ENCODE measurements at regions of chr17 and their contacts with region 1.

Region 1: GRCh38 chr17:18183334-18184142 is at the start of gene ALKBH5:
- DNase-seq: peak; percentile 100
- H3K4me3 ChIP-seq: peak within 1 kb of the TSS; percentile 92
- H3K27ac ChIP-seq: peak within 1 kb of the TSS; percentile 98
- H3K4me1 ChIP-seq: peaks cover 30% of the 10 kb centered on the region
- H3K27me3 ChIP-seq: no peaks in the 10 kb centered on the region
- CTCF ChIP-seq: peak; percentile 47; the same call in 1 of the 2 replicates
- total RNA-seq, gene ALKBH5: 119 and 124 TPM in 2 replicates

Region 2: DNA sequence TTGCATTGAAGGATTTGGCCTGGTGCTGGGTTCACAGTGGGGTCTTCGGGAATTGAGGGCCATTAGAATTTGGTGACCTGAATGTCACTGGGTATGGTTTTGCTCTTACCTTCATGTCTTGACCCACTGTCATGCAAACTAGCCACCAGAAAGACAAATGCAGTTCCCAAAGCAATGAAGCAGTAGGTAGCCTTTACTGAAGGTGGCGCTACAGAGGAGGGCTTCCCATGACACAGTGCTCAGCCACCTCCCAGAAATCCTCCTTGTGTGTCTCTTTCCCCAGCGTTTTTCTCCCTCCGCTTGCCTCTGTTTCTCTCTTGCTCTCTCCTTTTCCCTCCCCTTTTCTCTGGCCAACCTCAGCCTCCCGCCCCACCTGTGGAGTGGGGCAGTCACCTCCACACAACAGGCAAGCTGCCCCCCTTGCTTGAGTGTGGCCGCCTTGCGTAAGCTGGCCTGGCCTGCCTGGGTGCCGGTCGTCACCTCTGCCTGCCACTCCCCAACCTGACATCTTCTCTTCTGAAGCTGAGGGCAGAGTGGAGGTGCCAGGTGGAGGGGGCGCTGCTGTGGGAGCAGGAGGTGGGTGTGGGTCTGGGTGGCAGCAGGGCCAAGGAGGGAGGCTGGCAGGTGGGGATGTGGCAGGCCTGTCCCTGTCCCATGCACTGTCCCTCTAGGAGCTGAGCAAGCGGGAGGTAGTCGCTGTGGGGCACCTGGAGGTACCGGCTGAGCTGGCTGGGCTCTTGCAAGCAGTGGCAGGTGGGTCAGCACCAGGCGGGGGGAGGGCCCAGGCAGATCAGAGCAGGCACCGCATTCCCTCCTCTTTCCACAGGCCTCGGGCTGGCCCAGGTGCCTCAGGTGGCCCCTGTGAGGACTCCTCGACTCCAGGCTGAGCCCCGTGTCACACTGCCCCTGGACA is 40.2 kb before region 1 on chr17:
- CTCF ChIA-PET with region 1: interaction called, 10 read pairs
- POLR2A ChIA-PET with region 1: no interaction called
- intact Hi-C with region 1: no loop called
- DNase-seq: peak; percentile 54
- H3K4me3 ChIP-seq: no peak overlapping the region
- H3K27ac ChIP-seq: no peak overlapping the region
- H3K4me1 ChIP-seq: no peaks in the 10 kb centered on the region
- H3K27me3 ChIP-seq: no peaks in the 10 kb centered on the region
- CTCF ChIP-seq: peak; percentile 67

Region 3: DNA sequence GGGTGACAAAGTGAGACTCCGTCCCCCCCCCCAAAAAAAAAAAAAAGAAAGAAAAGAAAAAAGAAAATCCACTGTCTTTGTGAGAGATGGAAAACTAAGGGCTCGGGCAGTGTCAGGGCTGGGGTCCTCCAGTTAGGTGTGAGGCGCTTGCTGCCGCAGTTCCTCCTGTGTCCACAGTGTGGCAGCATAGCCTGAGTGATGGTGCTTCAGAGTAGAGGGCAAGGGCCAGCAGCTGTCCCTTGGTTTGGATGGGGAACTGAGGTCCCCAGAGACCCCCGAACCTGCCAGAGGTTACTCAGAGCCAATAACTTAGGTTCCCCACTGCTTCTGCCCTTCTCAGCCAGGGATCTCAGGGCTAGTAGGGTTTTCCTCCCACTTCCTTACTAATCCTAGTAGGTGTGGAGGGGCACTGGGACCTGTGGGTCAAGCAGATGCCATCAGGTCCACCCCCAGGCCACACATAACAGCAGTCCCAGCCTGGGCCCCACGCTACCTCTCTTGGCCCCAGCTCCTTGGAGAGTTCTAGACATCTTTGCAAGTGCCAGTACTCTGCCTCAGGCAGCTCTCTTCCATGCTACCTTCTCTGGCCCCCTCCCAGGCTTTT is 34.0 kb after region 1 on chr17:
- CTCF ChIA-PET with region 1: no interaction called
- POLR2A ChIA-PET with region 1: no interaction called
- intact Hi-C with region 1: loop called (anchors 2 kb)
- DNase-seq: peak; percentile 66
- H3K4me3 ChIP-seq: no peak overlapping the region
- H3K27ac ChIP-seq: no peak overlapping the region
- H3K4me1 ChIP-seq: no peaks in the 10 kb centered on the region
- H3K27me3 ChIP-seq: no peaks in the 10 kb centered on the region
- CTCF ChIP-seq: peak; percentile 91

Region 4: DNA sequence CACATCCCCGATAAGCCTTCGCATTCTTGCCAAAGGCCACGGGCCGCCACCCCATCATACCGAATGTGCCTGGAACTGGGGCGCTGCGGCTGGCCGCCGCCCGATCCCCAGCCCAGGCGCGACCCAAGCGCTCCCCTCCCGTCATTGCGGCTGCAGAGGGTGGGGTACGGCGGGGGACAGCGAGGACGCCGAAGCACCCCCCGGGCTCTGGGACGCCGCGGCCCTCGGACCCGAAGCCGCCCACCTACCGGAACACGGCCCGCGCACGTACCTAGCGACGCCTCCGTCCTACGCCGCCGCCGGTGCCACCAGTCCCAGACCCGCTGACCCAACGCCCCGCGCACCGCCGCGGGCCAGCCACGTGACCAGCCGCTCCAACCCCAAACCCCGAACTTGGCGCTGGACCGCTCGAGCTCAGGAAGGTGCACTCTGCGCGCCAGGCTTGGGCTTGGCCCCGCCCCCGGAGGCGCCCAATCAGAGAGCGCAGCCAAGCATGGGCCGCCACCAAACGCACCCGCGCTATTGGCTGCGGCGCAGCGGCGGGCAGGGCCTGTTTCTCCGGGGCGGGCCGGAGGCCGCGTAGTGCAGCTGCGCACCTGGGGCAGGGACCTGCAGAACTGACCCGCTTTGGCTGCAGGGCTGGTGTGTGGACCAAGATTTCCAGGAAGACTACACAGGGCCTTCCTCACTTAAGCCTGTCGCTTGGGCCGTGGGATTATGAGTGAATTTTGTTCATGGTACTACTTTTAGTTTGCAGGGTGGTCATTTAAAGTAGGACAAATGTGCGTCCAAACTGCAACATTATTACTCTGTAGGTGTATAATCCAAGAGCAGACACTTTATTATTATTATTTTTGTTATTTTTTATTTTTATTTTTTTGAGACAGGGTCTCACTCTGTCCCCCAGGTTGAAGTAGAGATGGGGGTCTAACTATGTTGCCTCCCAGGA is 179.8 kb after region 1 on chr17 and contains the start of gene SHMT1:
- CTCF ChIA-PET with region 1: no interaction called
- POLR2A ChIA-PET with region 1: no interaction called
- intact Hi-C with region 1: loop called (anchors 5 kb)
- DNase-seq: peak; percentile 94
- H3K4me3 ChIP-seq: peak within 1 kb of the TSS; percentile 87
- H3K27ac ChIP-seq: peak within 1 kb of the TSS; percentile 80
- H3K4me1 ChIP-seq: no peaks in the 10 kb centered on the region
- H3K27me3 ChIP-seq: no peaks in the 10 kb centered on the region
- CTCF ChIP-seq: no peak
- total RNA-seq, gene SHMT1: 54.0 and 63.5 TPM in 2 replicates

Region 5: DNA sequence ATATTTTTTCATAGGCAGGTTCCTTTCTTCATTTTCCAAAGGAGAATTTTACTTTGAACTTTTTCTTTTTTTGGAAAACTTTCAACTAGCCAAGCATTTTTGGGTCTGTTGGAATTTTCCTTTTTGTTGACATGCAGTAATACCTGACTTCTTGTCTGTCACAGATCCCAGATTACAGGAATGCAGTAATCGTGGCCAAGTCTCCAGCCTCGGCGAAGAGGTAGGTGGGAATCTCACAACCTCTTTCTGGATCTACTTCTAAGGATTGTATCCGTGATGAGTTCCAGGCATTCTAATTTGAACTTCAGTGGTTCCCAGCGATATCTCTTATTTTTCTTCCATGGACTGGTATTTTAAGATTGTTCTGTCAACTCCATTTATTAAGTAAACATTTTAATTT is 706.1 kb after region 1 on chr17:
- CTCF ChIA-PET with region 1: no interaction called
- POLR2A ChIA-PET with region 1: no interaction called
- intact Hi-C with region 1: no loop called
- DNase-seq: no peak
- H3K4me3 ChIP-seq: no peak overlapping the region
- H3K27ac ChIP-seq: peak overlapping the region; percentile 65
- H3K4me1 ChIP-seq: peaks cover 16% of the 10 kb centered on the region
- H3K27me3 ChIP-seq: no peaks in the 10 kb centered on the region
- CTCF ChIP-seq: no peak

Measured in A673 (cell line).